Activated CD4-positive, alpha-beta memory T cell treated with anti-CD3 and anti-CD28 coated beads for 36 hours (primary cell): ENCODE measurements at regions of chr12 and their contacts with region 1.

Region 1: DNA sequence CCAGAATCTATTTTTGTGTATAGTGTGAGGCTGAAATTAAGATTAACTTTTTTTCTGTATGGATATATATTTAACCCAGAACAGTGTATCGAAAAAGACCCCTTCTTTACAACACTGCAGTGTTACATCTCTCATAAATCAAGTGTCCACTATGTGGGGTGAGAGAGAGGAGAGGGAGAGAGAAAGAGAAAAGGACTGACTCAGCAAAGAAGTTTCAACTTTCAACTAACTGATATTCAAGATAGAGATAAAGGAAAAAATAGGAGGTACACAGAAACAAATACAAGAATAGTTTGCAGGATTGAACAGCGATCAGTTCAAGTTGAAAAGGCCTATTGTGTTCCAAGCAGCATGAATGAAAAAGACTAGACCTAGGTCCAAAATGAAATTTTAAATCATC is 126.7 kb upstream of the NEDD1 start:
- DNase-seq: no peak
- H3K4me3 Mint-ChIP-seq: no peak overlapping the region
- H3K27ac Mint-ChIP-seq: no peak overlapping the region
- H3K4me1 Mint-ChIP-seq: no peaks in the 10 kb centered on the region
- H3K27me3 Mint-ChIP-seq: peaks cover 2% of the 10 kb centered on the region

Region 2: DNA sequence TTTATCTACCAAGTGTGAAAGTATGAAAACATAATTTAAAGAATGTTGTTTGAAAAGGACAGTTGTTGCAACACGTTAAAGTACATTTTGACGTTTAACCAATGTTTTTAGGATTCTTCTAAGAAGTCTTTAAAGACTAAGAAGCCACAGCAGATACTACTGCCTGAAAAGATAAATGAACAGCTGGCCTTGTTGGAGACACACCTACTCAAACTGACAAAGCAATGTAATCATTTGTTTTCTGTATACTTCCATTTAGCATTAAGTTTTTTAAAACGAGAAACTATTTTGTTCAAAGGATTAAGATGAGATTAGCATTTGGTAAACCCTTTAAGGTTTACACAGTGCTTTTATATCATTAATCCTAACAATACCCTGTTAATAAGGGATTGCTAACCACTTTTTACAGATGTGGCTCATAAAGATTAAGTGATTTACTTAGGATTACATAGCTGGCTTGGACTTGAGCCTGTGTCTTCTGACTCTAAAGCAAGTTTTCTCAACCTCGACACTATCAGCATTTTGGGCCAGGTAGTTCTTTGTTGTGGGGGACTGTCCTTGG is 156.6 kb before region 1 on chr12:
- CTCF ChIA-PET with region 1: no interaction called
- POLR2A ChIA-PET with region 1: no interaction called
- intact Hi-C with region 1: loop called (anchors 5 kb)
- DNase-seq: no peak
- H3K4me3 Mint-ChIP-seq: no peak overlapping the region
- H3K27ac Mint-ChIP-seq: no peak overlapping the region
- H3K4me1 Mint-ChIP-seq: no peaks in the 10 kb centered on the region
- H3K27me3 Mint-ChIP-seq: no peaks in the 10 kb centered on the region